CD8-positive, alpha-beta T cell (primary cell): ENCODE measurements at regions of chr17 and their contacts with region 1.

Region 1: DNA sequence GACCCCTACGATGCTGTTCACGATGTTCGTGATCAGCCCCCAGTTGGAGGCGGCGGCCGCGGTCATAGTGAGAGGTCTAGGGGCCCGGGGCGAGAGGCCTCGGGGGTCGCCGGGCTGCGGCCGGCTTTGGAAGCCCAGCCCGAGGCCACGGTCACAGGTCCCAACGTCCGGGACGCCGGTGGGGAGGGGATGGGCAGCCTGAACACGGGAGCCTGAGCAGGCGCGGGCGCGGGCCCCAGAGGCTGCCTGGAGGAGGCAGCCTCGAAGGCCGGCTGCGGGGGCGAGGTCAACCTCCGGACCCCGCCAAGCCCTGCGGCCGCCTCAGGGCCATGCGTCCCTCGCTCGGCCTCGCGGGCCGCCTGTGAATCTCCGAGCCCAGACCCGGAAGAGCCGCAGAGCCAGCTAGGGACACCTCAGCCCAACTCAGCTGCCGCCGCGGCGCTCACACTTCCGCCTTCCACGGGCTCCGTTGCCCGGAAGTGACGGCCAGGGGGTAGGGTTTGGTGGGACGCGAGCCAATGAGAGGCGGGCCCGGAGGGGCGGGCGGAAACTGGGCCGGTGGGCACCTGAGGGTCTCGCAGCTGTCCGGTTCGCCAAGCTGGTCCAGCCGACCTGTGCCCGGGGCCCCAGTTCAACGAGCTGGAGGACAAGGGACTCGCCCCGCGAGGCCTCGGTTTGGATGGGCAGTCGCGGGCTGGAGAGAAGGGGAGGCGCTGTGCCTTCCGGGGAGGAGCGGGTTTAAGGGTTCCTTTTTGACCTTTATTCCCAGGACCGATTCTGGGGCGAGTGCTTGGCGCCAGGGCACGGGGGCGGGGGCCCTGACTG is at the start of gene SLC38A10:
- DNase-seq: peak; percentile 78 to 94 (median 91)
- ATAC-seq: peak; percentile 83
- H3K4me3 ChIP-seq: peak within 1 kb of the TSS; percentile 77 to 98
- H3K4me3 Mint-ChIP-seq: peak within 1 kb of the TSS; percentile 94
- H3K27ac ChIP-seq: peak within 1 kb of the TSS; percentile 85 to 90
- H3K27ac Mint-ChIP-seq: peak within 1 kb of the TSS; percentile 96
- H3K4me1 ChIP-seq: peaks cover 24% of the 10 kb centered on the region
- H3K4me1 Mint-ChIP-seq: peaks cover 42% of the 10 kb centered on the region
- H3K27me3 ChIP-seq: no peaks in the 10 kb centered on the region
- H3K27me3 Mint-ChIP-seq: no peaks in the 10 kb centered on the region
- CTCF ChIP-seq: no peak
- total RNA-seq, gene SLC38A10: 16.1 to 17.4 TPM

Region 2: DNA sequence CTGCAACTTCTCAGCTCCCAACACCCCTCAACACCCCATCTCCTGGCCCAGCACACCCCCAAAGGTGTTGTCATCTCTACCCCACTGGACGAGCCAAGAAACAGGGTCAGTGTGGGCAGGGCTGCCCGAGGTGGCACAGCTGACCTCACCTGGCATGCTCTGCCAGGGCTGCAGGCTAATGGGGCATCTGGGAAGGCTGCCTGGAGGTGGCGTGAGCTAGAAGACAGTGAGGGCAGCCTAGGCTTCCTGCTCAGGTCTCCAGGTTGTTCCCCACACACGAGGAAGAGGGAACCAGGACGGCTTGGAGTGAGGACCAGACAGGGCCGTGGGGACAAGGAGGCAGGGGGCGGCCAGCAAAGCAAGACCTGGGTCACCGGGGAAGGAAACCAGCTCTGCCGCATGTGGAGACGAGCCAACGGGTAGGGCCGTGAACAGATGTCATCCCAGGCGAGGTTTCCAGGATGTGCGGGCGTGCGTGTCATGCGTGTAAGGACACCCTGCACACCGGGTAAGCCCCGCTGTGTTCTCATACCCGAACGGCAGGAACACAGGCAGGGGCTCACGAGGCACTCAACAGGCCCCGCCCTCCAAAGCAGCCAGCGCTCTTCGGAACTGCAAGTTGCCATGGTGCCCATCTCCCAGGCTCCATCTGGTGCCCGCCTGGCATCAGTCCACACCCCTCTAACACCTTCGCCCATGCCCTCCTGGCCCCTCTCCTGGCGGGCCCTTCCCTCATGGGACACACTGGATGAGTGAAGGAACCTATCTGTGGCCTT is 159.4 kb before region 1 on chr17:
- CTCF ChIA-PET with region 1: no interaction called
- POLR2A ChIA-PET with region 1: no interaction called
- intact Hi-C with region 1: no loop called
- DNase-seq: no peak
- ATAC-seq: no peak
- H3K4me3 ChIP-seq: no peak overlapping the region
- H3K4me3 Mint-ChIP-seq: no peak overlapping the region
- H3K27ac ChIP-seq: no peak overlapping the region
- H3K27ac Mint-ChIP-seq: no peak overlapping the region
- H3K4me1 ChIP-seq: no peaks in the 10 kb centered on the region
- H3K4me1 Mint-ChIP-seq: no peaks in the 10 kb centered on the region
- H3K27me3 ChIP-seq: no peaks in the 10 kb centered on the region
- H3K27me3 Mint-ChIP-seq: no peaks in the 10 kb centered on the region
- CTCF ChIP-seq: no peak

Region 3: GRCh38 chr17:81279278-81280275 is 15.5 kb before region 1 on chr17:
- CTCF ChIA-PET with region 1: interaction called, 15 read pairs
- POLR2A ChIA-PET with region 1: no interaction called
- intact Hi-C with region 1: no loop called
- DNase-seq: no peak
- ATAC-seq: no peak
- H3K4me3 ChIP-seq: no peak overlapping the region
- H3K4me3 Mint-ChIP-seq: no peak overlapping the region
- H3K27ac ChIP-seq: no peak overlapping the region
- H3K27ac Mint-ChIP-seq: no peak overlapping the region
- H3K4me1 ChIP-seq: no peaks in the 10 kb centered on the region
- H3K4me1 Mint-ChIP-seq: peaks cover 4% of the 10 kb centered on the region
- H3K27me3 ChIP-seq: no peaks in the 10 kb centered on the region
- H3K27me3 Mint-ChIP-seq: no peaks in the 10 kb centered on the region
- CTCF ChIP-seq: no peak

Region 4: GRCh38 chr17:81322271-81323082 is 27.4 kb after region 1 on chr17:
- CTCF ChIA-PET with region 1: interaction called, 10 read pairs
- POLR2A ChIA-PET with region 1: no interaction called
- intact Hi-C with region 1: no loop called
- DNase-seq: peak in 5 of 9 experiments; percentile 21 to 60 (median 48)
- ATAC-seq: peak; percentile 56
- H3K4me3 ChIP-seq: no peak overlapping the region
- H3K4me3 Mint-ChIP-seq: no peak overlapping the region
- H3K27ac ChIP-seq: no peak overlapping the region
- H3K27ac Mint-ChIP-seq: no peak overlapping the region
- H3K4me1 ChIP-seq: no peaks in the 10 kb centered on the region
- H3K4me1 Mint-ChIP-seq: peaks cover 3% of the 10 kb centered on the region
- H3K27me3 ChIP-seq: peaks cover 0 to 3% of the 10 kb centered on the region in 2 experiments
- H3K27me3 Mint-ChIP-seq: no peaks in the 10 kb centered on the region
- CTCF ChIP-seq: no peak

Region 5: DNA sequence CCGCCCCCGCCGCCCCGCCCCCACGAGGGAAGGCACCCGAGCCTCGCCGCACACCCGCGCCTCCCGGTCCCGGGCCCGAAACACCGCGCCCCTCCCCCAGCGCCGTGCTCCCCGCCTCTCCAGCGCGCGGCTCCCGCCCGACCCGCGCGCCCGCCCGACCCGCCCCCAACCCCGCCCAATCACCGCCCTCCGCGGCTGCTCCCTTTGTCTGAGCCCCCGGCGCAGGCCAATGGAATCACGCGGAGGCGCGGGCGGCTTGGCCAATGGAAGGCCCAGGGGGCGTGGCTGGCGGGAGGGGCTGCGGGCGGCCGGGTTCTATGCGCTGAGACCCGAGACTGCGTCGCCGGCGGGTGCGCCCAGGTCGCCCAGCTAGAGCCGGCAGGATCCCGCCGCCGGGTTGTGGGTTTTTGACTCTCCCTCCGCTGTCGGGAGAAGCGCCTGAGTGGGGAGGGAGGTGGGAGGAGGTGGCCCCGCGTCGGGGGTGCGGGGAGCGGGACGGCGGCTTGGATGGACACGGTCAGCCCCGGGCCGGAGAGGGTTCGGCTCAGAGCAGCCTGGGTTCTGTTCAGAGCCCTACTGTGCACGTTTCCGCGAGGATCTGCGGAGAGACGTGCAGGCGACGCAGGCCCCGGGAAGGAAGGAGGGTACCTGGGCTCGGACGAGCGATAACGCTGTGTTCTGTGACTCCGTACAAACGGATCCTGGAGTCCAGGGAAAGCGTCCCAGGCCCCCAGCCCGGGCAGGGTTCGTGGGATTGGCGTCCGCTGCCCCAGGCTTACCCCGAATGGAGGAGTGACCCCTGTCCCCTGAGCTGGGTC is 51.2 kb after region 1 on chr17:
- CTCF ChIA-PET with region 1: interaction called, 3 read pairs
- POLR2A ChIA-PET with region 1: no interaction called
- intact Hi-C with region 1: loop called (anchors 1 to 2 kb)
- DNase-seq: peak; percentile 81 to 96 (median 94)
- ATAC-seq: peak; percentile 96
- H3K4me3 ChIP-seq: peak overlapping the region; percentile 43 to 47
- H3K4me3 Mint-ChIP-seq: peak overlapping the region; percentile 63
- H3K27ac ChIP-seq: no peak overlapping the region
- H3K27ac Mint-ChIP-seq: no peak overlapping the region
- H3K4me1 ChIP-seq: peaks cover 34% of the 10 kb centered on the region
- H3K4me1 Mint-ChIP-seq: peaks cover 21% of the 10 kb centered on the region
- H3K27me3 ChIP-seq: peaks cover 34 to 37% of the 10 kb centered on the region in 2 experiments
- H3K27me3 Mint-ChIP-seq: peaks cover 24% of the 10 kb centered on the region
- CTCF ChIP-seq: no peak

Region 6: GRCh38 chr17:81683584-81684237 is 388.6 kb after region 1 on chr17 and contains the starts of genes ARL16 and HGS:
- CTCF ChIA-PET with region 1: no interaction called
- POLR2A ChIA-PET with region 1: no interaction called
- intact Hi-C with region 1: loop called in 1 of 2 experiments (anchors 5 kb)
- DNase-seq: peak; percentile 95 to 99 (median 97)
- ATAC-seq: peak; percentile 98
- H3K4me3 ChIP-seq: peak within 1 kb of the TSS; percentile 89 to 98
- H3K4me3 Mint-ChIP-seq: peak within 1 kb of the TSS; percentile 89
- H3K27ac ChIP-seq: peak within 1 kb of the TSS; percentile 57 to 77
- H3K27ac Mint-ChIP-seq: peak within 1 kb of the TSS; percentile 88
- H3K4me1 ChIP-seq: peaks cover 27% of the 10 kb centered on the region
- H3K4me1 Mint-ChIP-seq: peaks cover 32% of the 10 kb centered on the region
- H3K27me3 ChIP-seq: no peaks in the 10 kb centered on the region
- H3K27me3 Mint-ChIP-seq: no peaks in the 10 kb centered on the region
- CTCF ChIP-seq: no peak
- total RNA-seq, gene ARL16: 14.3 to 16.4 TPM
- total RNA-seq, gene HGS: 121 to 126 TPM

Region 7: GRCh38 chr17:81722184-81723120 is 427.4 kb after region 1 on chr17:
- CTCF ChIA-PET with region 1: no interaction called
- POLR2A ChIA-PET with region 1: no interaction called
- intact Hi-C with region 1: no loop called
- DNase-seq: peak in 1 of 9 experiments; percentile 3
- ATAC-seq: no peak
- H3K4me3 ChIP-seq: no peak overlapping the region
- H3K4me3 Mint-ChIP-seq: no peak overlapping the region
- H3K27ac ChIP-seq: no peak overlapping the region
- H3K27ac Mint-ChIP-seq: no peak overlapping the region
- H3K4me1 ChIP-seq: no peaks in the 10 kb centered on the region
- H3K4me1 Mint-ChIP-seq: no peaks in the 10 kb centered on the region
- H3K27me3 ChIP-seq: no peaks in the 10 kb centered on the region
- H3K27me3 Mint-ChIP-seq: peaks cover 10% of the 10 kb centered on the region
- CTCF ChIP-seq: no peak